PC-9 (cell line): ENCODE measurements at regions of chr1 and their contacts with region 1.

Region 1: GRCh38 chr1:15526490-15527339 is at the start of gene DNAJC16:
- DNase-seq: peak; percentile 98 to 99
- H3K4me3 ChIP-seq: peak within 1 kb of the TSS; percentile 81
- H3K27ac ChIP-seq: peak within 1 kb of the TSS; percentile 69
- H3K4me1 ChIP-seq: peaks cover 17% of the 10 kb centered on the region
- H3K27me3 ChIP-seq: no peaks in the 10 kb centered on the region
- CTCF ChIP-seq: no peak
- total RNA-seq, gene DNAJC16: 12.0 and 18.8 TPM in 2 replicates

Region 2: DNA sequence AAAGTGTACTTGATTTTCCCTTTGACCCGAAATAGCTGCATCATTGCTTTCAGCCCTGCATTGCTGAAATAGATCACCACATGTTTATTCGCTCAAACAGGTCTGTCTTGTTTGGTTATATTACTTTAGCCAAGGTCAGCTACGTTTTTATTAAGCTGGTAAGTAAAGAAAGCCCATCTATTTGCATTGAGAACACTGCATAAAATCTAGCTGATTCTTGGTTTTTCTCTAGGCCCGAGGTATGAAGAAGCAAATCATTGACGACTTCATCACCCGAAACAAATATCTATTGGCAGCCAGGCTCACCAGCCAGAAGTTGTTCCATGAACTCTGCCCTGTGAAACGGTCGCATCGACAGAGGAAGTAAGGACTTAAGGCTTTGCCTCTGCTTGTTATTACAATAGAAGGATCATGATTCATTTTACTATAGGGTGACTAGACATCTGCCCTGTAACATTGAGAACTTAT is 32.6 kb after region 1 on chr1:
- CTCF ChIA-PET with region 1: no interaction called
- POLR2A ChIA-PET with region 1: interaction called, 6 read pairs
- intact Hi-C with region 1: loop called (anchors 2 kb)
- DNase-seq: peak; percentile 44 to 89
- H3K4me3 ChIP-seq: peak overlapping the region; percentile 41; the same call in 1 of the 2 replicates
- H3K27ac ChIP-seq: peak overlapping the region; percentile 99
- H3K4me1 ChIP-seq: peaks cover 36% of the 10 kb centered on the region
- H3K27me3 ChIP-seq: no peaks in the 10 kb centered on the region
- CTCF ChIP-seq: no peak

Region 3: GRCh38 chr1:15684468-15685291 is 158.0 kb after region 1 on chr1:
- CTCF ChIA-PET with region 1: no interaction called
- POLR2A ChIA-PET with region 1: interaction called, 5 read pairs
- intact Hi-C with region 1: loop called (anchors 2 kb)
- DNase-seq: no peak
- H3K4me3 ChIP-seq: peak overlapping the region; percentile 61
- H3K27ac ChIP-seq: no peak overlapping the region
- H3K4me1 ChIP-seq: peaks cover 49% of the 10 kb centered on the region
- H3K27me3 ChIP-seq: no peaks in the 10 kb centered on the region
- CTCF ChIP-seq: no peak